Heart left ventricle (tissue), 16 donors: ENCODE measurements at regions of chr12 and their contacts with region 1.

Region 1: GRCh38 chr12:51531978-51532497 is 59.0 kb upstream of the SCN8A start:
- DNase-seq: peak in 4 of 5 donors; percentile 55 to 68 (median 64)
- ATAC-seq: peak; percentile 61 to 93 (median 86)
- H3K4me3 ChIP-seq: no peak overlapping the region
- H3K27ac ChIP-seq: no peak overlapping the region
- H3K4me1 ChIP-seq: peaks cover 0 to 3% (median 0%) of the 10 kb centered on the region in 12 donors
- H3K27me3 ChIP-seq: peaks cover 0 to 34% (median 14%) of the 10 kb centered on the region in 9 donors
- CTCF ChIP-seq: peak; percentile 77 to 89 (median 84)
- POLR2A ChIP-seq: no peak

Region 2: DNA sequence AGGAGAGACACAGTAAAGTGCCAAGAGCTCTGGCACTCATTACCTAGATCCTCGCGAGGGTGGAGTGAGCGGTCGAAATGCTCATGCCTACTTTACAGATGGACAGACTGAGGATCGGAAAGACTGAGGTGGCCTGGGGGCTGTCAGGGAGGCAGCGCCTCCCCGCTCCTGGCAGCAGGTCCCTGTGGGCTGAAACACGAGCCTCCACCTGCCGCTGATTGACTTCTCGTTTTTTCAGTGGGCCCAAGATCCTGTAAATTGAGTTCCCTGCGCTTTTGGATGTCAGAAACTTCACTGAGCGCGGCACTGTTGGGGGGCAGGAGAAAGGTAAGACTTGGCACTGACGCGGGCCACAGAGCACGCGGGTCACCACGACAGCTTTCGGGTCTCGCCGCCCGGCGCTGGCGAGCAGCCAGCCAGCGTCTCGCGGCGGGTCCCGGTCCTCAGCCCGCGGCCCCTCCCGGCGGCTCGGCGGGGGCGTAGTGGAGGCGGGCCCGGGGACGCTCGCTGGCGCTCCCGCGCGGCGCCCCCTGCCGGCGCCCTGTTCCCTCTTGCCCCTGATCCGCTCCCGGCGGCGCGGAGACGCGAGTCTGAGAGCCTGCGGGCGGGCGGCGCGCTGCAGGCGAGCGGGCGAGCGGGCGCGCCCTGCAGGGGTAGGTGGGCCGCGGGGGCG is 58.4 kb after region 1 on chr12:
- intact Hi-C with region 1: no loop called
- DNase-seq: peak; percentile 39 to 76 (median 43)
- ATAC-seq: peak in 3 of 4 donors; percentile 67 to 78 (median 71)
- H3K4me3 ChIP-seq: peak overlapping the region in 11 of 12 donors; percentile 26 to 67 (median 50)
- H3K27ac ChIP-seq: no peak overlapping the region
- H3K4me1 ChIP-seq: peaks cover 0 to 16% (median 4%) of the 10 kb centered on the region in 12 donors
- H3K27me3 ChIP-seq: peaks cover 0 to 49% (median 8%) of the 10 kb centered on the region in 9 donors
- CTCF ChIP-seq: peak in 11 of 12 donors; percentile 14 to 66 (median 42)
- POLR2A ChIP-seq: no peak

Region 3: DNA sequence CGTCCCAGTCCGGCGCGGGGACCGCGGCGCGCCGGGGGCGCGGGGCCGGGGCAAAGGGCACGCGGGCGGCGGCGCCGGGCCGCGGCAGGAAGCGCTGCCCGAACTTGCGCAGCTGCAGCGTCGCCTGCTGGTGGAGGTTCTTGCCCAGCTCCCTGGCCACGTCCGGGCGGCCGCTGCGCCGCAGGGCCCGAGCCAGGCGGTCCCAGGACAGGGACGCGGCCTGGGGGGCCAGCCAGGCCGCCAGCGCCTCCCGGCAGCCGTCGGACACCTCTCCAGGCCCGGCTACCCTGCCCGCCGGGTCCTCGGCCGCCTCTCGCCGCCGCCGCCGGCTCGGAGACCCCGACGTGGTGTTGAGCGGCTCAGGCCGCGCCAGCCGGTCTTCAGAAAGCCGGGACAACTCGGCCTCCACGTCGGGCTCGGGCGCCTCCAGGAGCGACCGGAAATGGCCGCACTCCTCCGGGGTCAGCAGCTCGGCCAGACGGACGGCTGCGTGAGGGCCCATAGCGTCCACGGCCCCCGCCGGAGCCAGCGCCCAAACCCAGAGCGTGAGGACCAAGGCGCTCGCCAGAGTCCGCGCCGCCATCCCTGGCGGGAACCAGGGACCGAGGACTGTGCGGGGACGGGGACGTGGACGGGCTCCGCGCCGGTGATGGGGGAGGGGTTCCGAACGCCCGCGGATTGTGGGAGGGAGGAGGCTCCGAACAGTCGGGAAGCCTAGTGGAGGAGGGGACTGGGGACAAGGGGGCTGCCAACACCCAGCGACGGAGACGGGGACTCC is 282.5 kb after region 1 on chr12:
- intact Hi-C with region 1: loop called in 6 of 10 experiments (anchors 5 to 10 kb)
- DNase-seq: peak; percentile 77 to 91 (median 85)
- ATAC-seq: peak; percentile 70 to 90 (median 88)
- H3K4me3 ChIP-seq: peak overlapping the region; percentile 44 to 83 (median 65)
- H3K27ac ChIP-seq: peak overlapping the region; percentile 80 to 94 (median 86)
- H3K4me1 ChIP-seq: peaks cover 0 to 19% (median 8%) of the 10 kb centered on the region in 12 donors
- H3K27me3 ChIP-seq: peaks cover 0 to 10% (median 2%) of the 10 kb centered on the region in 9 donors
- CTCF ChIP-seq: peak; percentile 27 to 85 (median 62)
- POLR2A ChIP-seq: peak in 1 of 2 donors; percentile 42